ENCODE measurements at regions of chr17 and their contacts with region 1.

Region 1: GRCh38 chr17:62724398-62725146 is 83.5 kb downstream of the MARCHF10 start:
- DNase-seq: peak; percentile 64
- H3K4me3 Mint-ChIP-seq: no peak overlapping the region
- H3K27ac Mint-ChIP-seq: peak overlapping the region; percentile 21
- H3K4me1 Mint-ChIP-seq: peaks cover 20% of the 10 kb centered on the region
- H3K27me3 Mint-ChIP-seq: peaks cover 77% of the 10 kb centered on the region

Region 2: DNA sequence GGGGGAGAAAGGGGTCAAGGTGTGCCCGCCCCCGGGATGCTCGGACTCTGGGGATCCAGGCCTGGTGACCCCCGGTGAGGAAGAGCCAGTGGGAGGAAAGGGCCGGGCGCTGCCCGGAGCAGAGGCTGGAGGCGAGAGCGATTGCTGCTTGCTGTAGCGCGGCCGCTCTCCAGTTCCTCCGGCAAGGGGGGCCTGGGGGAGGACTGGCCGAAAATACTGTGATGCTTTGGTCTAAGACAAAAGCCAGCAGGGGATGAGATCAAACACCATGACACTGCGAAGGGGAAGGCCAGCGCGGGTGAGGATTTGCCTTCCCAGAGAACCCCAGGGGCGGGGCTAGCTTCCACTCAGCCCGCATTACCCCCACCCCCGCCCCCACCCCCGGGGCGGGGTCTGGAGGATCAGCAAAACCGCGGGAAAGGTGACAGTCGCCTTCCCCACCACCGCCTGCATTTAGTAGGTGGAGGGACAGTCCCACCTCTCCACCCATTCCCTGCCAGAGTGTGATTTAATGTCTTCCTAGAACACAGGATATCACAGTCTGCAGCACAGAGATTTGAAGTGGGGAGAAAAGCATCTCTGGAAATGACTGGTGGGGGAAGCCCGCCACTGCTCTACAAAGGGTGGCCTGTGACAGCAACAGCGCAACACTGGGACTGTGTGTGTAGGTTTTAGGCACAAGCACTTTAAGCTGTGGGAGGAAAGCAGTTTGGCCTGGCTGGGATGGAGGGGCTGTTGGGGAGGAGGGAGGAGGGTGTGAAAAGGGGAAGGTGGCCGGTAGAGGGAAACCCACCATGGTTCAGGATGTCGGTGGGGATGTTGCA is 71.4 kb before region 1 on chr17:
- intact Hi-C with region 1: loop called (anchors 1 kb)
- DNase-seq: peak; percentile 52
- H3K4me3 Mint-ChIP-seq: peak overlapping the region; percentile 75
- H3K27ac Mint-ChIP-seq: peak overlapping the region; percentile 42
- H3K4me1 Mint-ChIP-seq: peaks cover 19% of the 10 kb centered on the region
- H3K27me3 Mint-ChIP-seq: peaks cover 62% of the 10 kb centered on the region